ENCODE measurements at regions of chr19 and their contacts with region 1.

Region 1: GRCh38 chr19:8654591-8655339 is 24.3 kb downstream of the NFILZ start:
- DNase-seq: peak in 41 of 42 donors; percentile 26 to 81 (median 57)

Region 2: DNA sequence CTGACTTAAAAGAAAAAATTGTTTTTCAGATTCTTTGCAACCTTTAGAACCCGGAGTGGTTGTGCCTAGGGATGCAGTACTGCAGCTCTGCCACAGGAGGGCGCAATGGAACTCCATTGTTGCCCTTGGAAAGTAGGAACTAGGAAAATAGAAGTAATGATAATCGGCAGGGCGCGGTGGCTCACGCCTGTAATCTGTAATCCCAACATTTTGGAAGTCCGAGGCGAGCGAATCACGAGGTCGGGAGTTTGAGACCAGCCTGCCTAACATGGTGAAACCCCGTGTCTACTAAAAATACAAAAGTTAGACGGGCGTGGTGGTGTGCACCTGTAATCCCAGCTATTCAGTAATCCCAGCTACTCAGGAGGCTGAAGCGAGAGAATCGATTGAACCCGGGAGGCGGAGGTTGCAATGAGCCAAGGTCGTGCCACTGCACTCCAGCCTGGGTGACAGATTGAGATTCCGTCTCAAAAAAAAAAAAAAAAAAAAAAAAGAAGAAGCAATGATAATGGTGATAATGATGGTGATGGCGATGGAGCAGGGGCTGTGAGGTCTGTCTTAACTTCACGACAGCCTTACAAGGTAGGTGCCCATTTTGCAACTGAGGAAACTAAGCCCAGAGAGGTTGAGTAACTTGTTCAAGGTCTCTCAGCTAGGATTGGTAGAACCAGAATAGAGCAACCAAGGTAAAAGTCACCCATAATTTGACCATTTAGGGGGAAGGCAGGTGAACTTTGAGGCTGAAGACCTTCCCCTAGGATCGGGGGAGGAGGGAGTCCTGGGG is 38.8 kb before region 1 on chr19:
- intact Hi-C with region 1: no loop called
- DNase-seq: peak in 36 of 42 donors; percentile 17 to 71 (median 52)

Region 3: DNA sequence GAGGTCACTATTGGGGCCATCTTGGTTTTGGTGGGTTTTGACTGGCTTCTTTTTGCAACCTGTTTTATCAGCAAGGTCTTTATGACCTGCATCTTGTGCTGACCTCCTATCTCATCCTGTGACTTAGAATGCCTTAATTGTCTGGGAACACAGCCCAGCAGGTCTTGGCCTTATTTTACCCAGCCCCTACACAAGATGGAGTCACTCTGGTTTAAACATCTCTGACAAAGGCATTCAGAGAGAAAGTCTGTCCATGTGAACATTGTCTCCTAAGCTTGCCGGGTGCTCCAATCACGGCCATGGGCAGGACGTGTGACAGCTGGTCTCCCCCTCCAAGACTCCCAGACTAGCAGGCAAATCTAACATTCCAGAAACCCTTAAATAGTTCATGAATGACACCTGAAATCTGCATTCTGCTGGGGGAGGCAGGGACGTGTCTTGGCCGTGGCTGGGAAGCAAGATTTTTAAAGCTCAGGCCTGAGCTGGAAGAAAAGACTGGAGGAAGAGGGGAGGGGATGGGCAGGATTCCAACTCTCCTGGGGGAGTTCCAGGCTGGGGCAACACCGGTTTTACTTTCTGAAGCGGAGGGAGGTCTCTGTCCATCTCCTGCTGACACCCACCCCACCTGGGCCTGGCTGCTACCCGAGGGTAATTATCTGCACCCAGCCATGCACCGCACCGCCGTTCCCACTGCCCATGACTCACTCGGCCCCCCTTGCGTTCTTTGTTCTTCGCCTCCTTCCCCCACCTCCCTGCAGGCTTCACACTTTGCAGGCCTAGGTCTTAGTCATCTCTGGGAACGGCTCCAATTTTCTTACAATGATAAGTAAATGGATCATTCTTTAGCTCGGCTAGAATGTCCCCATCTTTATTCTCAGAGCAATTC is 420.5 kb after region 1 on chr19:
- intact Hi-C with region 1: loop called (anchors 10 kb)
- DNase-seq: peak; percentile 13 to 91 (median 50)

Measured in head of caudate nucleus (tissue), 42 donors.